ENCODE measurements at regions of chr6 and their contacts with region 1.

Region 1: GRCh38 chr6:36650848-36651478 is 27.6 kb upstream of the CDKN1A start:
- H3K4me3 Mint-ChIP-seq: peak overlapping the region; percentile 30
- H3K27ac Mint-ChIP-seq: peak overlapping the region; percentile 86
- H3K4me1 Mint-ChIP-seq: peaks cover 54% of the 10 kb centered on the region
- H3K27me3 Mint-ChIP-seq: no peaks in the 10 kb centered on the region

Region 2: GRCh38 chr6:36671687-36672380 is 20.9 kb after region 1 on chr6:
- intact Hi-C with region 1: loop called (anchors 2 kb)
- H3K4me3 Mint-ChIP-seq: no peak overlapping the region
- H3K27ac Mint-ChIP-seq: peak overlapping the region; percentile 38
- H3K4me1 Mint-ChIP-seq: peaks cover 60% of the 10 kb centered on the region
- H3K27me3 Mint-ChIP-seq: no peaks in the 10 kb centered on the region

Region 3: GRCh38 chr6:36678518-36679027 is 27.6 kb after region 1 on chr6 and contains the start of gene CDKN1A:
- intact Hi-C with region 1: loop called (anchors 1 kb)
- H3K4me3 Mint-ChIP-seq: peak within 1 kb of the TSS; percentile 99
- H3K27ac Mint-ChIP-seq: peak within 1 kb of the TSS; percentile 99
- H3K4me1 Mint-ChIP-seq: peaks cover 71% of the 10 kb centered on the region
- H3K27me3 Mint-ChIP-seq: no peaks in the 10 kb centered on the region